HEK293 (cell line): ENCODE measurements at regions of chr20 and their contacts with region 1.

Region 1: DNA sequence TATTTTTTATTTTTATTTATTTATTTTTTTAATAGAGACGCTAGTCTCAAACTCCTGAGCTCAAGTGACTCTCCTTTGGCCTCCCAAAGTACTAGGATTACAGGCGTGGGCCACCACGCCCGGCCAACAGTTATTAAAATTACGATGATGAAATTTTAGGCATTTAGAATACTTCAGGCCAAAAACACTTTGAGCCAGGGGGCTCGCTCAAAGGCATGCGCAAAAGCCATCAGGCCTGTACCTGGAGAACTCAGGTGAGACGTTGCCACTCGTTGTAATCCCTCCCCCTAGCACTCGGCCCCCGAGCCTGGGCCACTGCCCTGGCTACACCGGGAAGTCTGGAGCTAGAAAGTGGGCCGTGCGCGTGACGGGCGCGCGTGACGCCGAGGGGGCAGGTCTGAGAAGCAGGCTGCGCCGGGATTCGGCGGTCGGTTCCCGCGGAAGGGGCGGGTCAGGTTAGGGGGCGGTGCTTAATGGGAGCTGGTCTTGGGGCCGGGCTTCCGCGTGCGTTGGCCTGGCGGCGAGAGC is 337 bp upstream of the CBFA2T2 start:
- H3K4me3 ChIP-seq: peak overlapping the region; percentile 53
- H3K27ac ChIP-seq: peak overlapping the region; percentile 58
- H3K4me1 ChIP-seq: no peaks in the 10 kb centered on the region
- CTCF ChIP-seq: no peak

Region 2: DNA sequence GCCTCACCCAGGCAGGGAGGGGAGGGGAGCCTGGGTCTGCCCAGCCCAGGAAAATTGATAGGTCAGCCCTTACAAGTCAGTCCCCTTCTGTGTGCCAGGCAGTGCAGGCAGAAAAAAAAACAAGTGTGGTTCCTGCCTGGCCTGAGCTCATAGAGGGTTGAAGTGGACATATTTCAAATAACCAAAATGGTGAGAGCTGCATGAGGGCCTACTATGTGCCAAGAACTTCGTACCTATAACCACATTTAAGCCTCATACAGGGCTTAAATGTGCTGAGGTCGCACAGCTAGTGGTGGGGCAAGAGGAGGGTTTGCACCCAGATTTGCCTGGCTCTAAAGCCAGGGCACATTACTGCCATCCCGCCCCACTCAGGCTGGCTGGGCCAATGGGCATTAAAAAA is 897.5 kb before region 1 on chr20:
- CTCF ChIA-PET with region 1: no interaction called
- POLR2A ChIA-PET with region 1: interaction called, 12 read pairs
- H3K4me3 ChIP-seq: no peak overlapping the region
- H3K27ac ChIP-seq: no peak overlapping the region
- H3K4me1 ChIP-seq: no peaks in the 10 kb centered on the region
- CTCF ChIP-seq: no peak

Region 3: DNA sequence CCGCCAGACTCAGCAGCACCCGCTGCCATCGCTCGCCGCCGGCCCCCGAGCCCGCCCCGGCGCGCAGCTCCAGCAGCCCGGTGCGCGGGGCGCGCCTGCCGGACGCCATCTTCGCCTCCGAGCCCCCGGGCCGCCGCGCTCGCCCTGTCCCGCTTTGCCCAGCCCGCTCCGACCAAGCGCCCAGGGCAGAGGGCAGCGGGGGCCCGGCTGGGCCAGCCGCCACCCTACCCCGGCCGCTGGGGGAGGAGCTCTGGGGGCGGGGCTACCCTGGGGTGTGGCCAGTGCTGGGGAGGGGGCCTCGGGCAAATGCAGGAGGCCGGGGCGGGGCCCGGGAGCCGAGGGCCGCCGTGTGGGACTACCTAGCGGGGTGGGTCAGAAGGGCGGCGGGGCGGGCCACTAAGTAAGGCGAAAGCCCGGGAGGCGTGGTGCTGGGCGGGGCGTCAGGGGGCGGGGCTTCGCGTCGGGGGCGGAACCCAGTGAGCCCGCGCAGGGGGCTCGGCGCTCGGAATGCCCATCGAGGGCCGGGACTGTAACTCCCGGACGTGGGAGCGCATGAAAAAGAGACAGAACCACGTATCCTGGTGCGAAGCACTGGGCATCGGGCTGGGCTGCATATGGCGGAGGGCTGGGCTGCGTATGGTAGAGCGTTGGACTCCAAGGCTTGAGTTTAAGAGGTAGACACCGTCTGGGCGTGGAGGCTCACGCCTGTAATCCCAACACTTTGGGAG is 45.9 kb before region 1 on chr20 and contains the start of gene SNTA1:
- CTCF ChIA-PET with region 1: no interaction called
- POLR2A ChIA-PET with region 1: interaction called, 12 read pairs
- H3K4me3 ChIP-seq: peak within 1 kb of the TSS; percentile 56
- H3K27ac ChIP-seq: peak within 1 kb of the TSS; percentile 66; the same call in 1 of the 2 replicates
- H3K4me1 ChIP-seq: no peaks in the 10 kb centered on the region; the same call in 1 of the 2 replicates
- CTCF ChIP-seq: no peak

Region 4: GRCh38 chr20:33475381-33476150 is 14.0 kb before region 1 on chr20:
- CTCF ChIA-PET with region 1: no interaction called
- POLR2A ChIA-PET with region 1: interaction called, 19 read pairs
- H3K4me3 ChIP-seq: no peak overlapping the region
- H3K27ac ChIP-seq: no peak overlapping the region
- H3K4me1 ChIP-seq: no peaks in the 10 kb centered on the region
- CTCF ChIP-seq: no peak

Region 5: GRCh38 chr20:33501000-33501399 is 11.4 kb after region 1 on chr20:
- CTCF ChIA-PET with region 1: no interaction called
- POLR2A ChIA-PET with region 1: interaction called, 10 read pairs
- H3K4me3 ChIP-seq: no peak overlapping the region
- H3K27ac ChIP-seq: no peak overlapping the region
- H3K4me1 ChIP-seq: no peaks in the 10 kb centered on the region
- CTCF ChIP-seq: no peak

Region 6: GRCh38 chr20:33663161-33664094 is 173.9 kb after region 1 on chr20:
- CTCF ChIA-PET with region 1: no interaction called
- POLR2A ChIA-PET with region 1: interaction called, 10 read pairs
- H3K4me3 ChIP-seq: peak overlapping the region; percentile 58
- H3K27ac ChIP-seq: peak overlapping the region; percentile 62; the same call in 1 of the 2 replicates
- H3K4me1 ChIP-seq: no peaks in the 10 kb centered on the region
- CTCF ChIP-seq: 0 out of 2 replicates have a peak, but pooled peaks have one; percentile 14